CD4-positive, alpha-beta T cell (primary cell): ENCODE measurements at regions of chr10 and their contacts with region 1.

Region 1: DNA sequence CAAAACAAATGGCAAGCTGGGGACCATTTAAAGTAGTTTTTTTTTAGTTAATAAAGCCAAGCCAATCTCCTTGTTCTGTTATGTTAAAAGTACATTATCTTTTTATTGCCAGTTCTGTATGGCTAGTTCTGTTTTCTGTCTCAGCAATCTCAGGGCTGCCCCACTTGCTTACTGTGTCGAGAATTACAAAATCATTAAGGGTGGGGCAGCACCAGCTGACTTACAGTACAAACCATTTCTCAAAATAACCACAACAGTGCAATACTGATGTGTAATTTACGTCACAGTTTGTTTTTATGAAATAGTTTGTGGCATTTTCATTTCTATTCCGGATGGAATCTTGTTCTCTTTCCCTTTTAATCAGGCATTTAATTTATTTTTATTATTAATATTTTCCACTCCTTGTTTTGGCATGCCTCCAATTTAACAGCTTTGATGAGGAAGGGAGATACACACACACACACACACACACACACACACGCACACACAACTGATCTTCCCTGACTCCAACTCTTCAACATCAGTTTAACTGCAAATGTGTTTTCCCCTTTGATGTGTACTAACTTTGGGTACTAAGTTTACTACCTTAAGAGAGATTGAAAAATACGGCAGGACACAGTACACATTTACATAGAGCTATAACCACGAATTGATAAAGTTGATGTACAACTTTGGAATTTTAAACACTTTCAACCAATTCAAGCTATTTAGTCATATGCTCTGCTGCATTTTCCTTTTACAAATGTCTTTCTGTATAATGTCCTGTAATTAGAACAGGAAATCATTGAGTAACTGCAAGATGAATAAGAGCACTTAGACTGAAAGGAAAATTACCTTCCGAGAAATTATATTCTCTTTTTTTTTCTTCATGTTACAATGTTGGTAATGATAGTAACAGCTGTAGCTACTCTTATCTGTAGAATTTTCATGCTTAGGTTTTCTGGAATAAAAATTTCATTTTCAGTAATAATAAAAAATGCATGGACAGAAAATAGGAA is 91.5 kb downstream of the ARID5B start:
- DNase-seq: peak in 12 of 14 experiments; percentile 29 to 89 (median 53)
- ATAC-seq: peak; percentile 83
- H3K4me3 ChIP-seq: peak overlapping the region; percentile 15
- H3K4me3 Mint-ChIP-seq: peak overlapping the region; percentile 31
- H3K27ac ChIP-seq: peak overlapping the region; percentile 62 to 64
- H3K27ac Mint-ChIP-seq: peak overlapping the region; percentile 85
- H3K4me1 ChIP-seq: peaks cover 14% of the 10 kb centered on the region
- H3K4me1 Mint-ChIP-seq: peaks cover 73% of the 10 kb centered on the region
- H3K27me3 ChIP-seq: no peaks in the 10 kb centered on the region
- H3K27me3 Mint-ChIP-seq: no peaks in the 10 kb centered on the region
- CTCF ChIP-seq: no peak

Region 2: GRCh38 chr10:61943674-61944410 is 49.1 kb before region 1 on chr10:
- CTCF ChIA-PET with region 1: no interaction called
- POLR2A ChIA-PET with region 1: interaction called, 9 read pairs
- intact Hi-C with region 1: loop called in 1 of 2 experiments (anchors 1 kb)
- DNase-seq: peak in 5 of 14 experiments; percentile 9 to 79 (median 63)
- ATAC-seq: peak; percentile 73
- H3K4me3 ChIP-seq: peak overlapping the region; percentile 38
- H3K4me3 Mint-ChIP-seq: peak overlapping the region; percentile 59
- H3K27ac ChIP-seq: peak overlapping the region in 1 of 2 donors; percentile 71
- H3K27ac Mint-ChIP-seq: peak overlapping the region; percentile 82
- H3K4me1 ChIP-seq: peaks cover 12% of the 10 kb centered on the region
- H3K4me1 Mint-ChIP-seq: peaks cover 55% of the 10 kb centered on the region
- H3K27me3 ChIP-seq: no peaks in the 10 kb centered on the region
- H3K27me3 Mint-ChIP-seq: no peaks in the 10 kb centered on the region
- CTCF ChIP-seq: peak; percentile 22

Region 3: DNA sequence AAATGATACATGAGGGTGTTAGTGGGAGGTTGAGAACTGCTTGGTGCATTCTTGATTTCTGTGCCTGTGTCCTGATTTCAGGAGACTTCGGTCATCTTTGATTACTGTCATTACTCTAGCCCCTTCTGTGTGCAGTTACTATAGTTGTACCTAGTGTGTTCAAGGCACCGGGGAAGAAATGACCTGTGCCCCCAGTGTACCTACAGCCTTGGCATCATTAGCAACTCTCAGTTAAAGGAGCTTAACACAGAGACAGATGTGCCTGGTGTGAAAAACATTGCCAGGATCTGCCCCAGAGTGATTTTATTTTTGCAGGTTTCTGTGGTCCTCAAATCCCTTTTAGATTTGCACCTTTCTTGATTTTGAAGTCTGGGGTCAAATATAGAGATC is 29.3 kb before region 1 on chr10:
- CTCF ChIA-PET with region 1: no interaction called
- POLR2A ChIA-PET with region 1: interaction called, 7 read pairs
- intact Hi-C with region 1: loop called in 1 of 2 experiments (anchors 2 kb)
- DNase-seq: no peak
- ATAC-seq: no peak
- H3K4me3 ChIP-seq: no peak overlapping the region
- H3K4me3 Mint-ChIP-seq: no peak overlapping the region
- H3K27ac ChIP-seq: no peak overlapping the region
- H3K27ac Mint-ChIP-seq: peak overlapping the region; percentile 72
- H3K4me1 ChIP-seq: peaks cover 22% of the 10 kb centered on the region
- H3K4me1 Mint-ChIP-seq: peaks cover 64% of the 10 kb centered on the region
- H3K27me3 ChIP-seq: no peaks in the 10 kb centered on the region
- H3K27me3 Mint-ChIP-seq: no peaks in the 10 kb centered on the region
- CTCF ChIP-seq: no peak

Region 4: GRCh38 chr10:62025134-62025794 is 32.3 kb after region 1 on chr10:
- CTCF ChIA-PET with region 1: no interaction called
- POLR2A ChIA-PET with region 1: no interaction called
- intact Hi-C with region 1: no loop called
- DNase-seq: no peak
- ATAC-seq: no peak
- H3K4me3 ChIP-seq: no peak overlapping the region
- H3K4me3 Mint-ChIP-seq: no peak overlapping the region
- H3K27ac ChIP-seq: no peak overlapping the region
- H3K27ac Mint-ChIP-seq: no peak overlapping the region
- H3K4me1 ChIP-seq: peaks cover 9% of the 10 kb centered on the region
- H3K4me1 Mint-ChIP-seq: peaks cover 83% of the 10 kb centered on the region
- H3K27me3 ChIP-seq: no peaks in the 10 kb centered on the region
- H3K27me3 Mint-ChIP-seq: no peaks in the 10 kb centered on the region
- CTCF ChIP-seq: no peak

Region 5: GRCh38 chr10:62038609-62039190 is 45.7 kb after region 1 on chr10:
- CTCF ChIA-PET with region 1: interaction called, 10 read pairs
- POLR2A ChIA-PET with region 1: interaction called, 12 read pairs
- intact Hi-C with region 1: no loop called
- DNase-seq: peak; percentile 65 to 88 (median 72)
- ATAC-seq: peak; percentile 84
- H3K4me3 ChIP-seq: peak overlapping the region; percentile 29
- H3K4me3 Mint-ChIP-seq: peak overlapping the region; percentile 72
- H3K27ac ChIP-seq: no peak overlapping the region
- H3K27ac Mint-ChIP-seq: peak overlapping the region; percentile 68
- H3K4me1 ChIP-seq: peaks cover 54% of the 10 kb centered on the region
- H3K4me1 Mint-ChIP-seq: peaks cover 87% of the 10 kb centered on the region
- H3K27me3 ChIP-seq: no peaks in the 10 kb centered on the region
- H3K27me3 Mint-ChIP-seq: no peaks in the 10 kb centered on the region
- CTCF ChIP-seq: peak; percentile 82

Region 6: DNA sequence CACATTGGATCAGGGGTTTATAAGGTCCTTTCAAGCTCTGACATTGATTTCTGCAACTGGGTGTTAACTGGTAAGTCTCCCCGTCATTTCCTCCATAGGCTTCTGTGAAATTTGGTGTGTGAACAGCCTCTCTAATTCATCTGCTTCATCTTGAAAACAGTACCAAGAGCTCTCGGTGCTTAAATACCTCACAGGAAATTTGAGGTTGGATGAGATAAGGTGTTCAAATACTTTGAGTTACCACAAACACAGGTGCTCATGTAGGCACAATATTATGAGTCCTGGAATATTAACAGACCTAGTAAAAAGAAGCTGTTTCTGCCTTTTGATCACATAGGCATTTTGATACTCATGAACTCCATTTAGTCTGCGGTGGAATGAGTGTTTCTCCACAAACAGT is 190.5 kb after region 1 on chr10:
- CTCF ChIA-PET with region 1: no interaction called
- POLR2A ChIA-PET with region 1: interaction called, 6 read pairs
- intact Hi-C with region 1: loop called in 1 of 2 experiments (anchors 2 kb)
- DNase-seq: peak in 10 of 14 experiments; percentile 16 to 92 (median 37)
- ATAC-seq: peak; percentile 85
- H3K4me3 ChIP-seq: no peak overlapping the region
- H3K4me3 Mint-ChIP-seq: peak overlapping the region; percentile 21
- H3K27ac ChIP-seq: peak overlapping the region; percentile 37 to 38
- H3K27ac Mint-ChIP-seq: peak overlapping the region; percentile 86
- H3K4me1 ChIP-seq: peaks cover 45% of the 10 kb centered on the region
- H3K4me1 Mint-ChIP-seq: peaks cover 91% of the 10 kb centered on the region
- H3K27me3 ChIP-seq: no peaks in the 10 kb centered on the region
- H3K27me3 Mint-ChIP-seq: no peaks in the 10 kb centered on the region
- CTCF ChIP-seq: no peak